ENCODE measurements at regions of chr11 and their contacts with region 1.

Region 1: DNA sequence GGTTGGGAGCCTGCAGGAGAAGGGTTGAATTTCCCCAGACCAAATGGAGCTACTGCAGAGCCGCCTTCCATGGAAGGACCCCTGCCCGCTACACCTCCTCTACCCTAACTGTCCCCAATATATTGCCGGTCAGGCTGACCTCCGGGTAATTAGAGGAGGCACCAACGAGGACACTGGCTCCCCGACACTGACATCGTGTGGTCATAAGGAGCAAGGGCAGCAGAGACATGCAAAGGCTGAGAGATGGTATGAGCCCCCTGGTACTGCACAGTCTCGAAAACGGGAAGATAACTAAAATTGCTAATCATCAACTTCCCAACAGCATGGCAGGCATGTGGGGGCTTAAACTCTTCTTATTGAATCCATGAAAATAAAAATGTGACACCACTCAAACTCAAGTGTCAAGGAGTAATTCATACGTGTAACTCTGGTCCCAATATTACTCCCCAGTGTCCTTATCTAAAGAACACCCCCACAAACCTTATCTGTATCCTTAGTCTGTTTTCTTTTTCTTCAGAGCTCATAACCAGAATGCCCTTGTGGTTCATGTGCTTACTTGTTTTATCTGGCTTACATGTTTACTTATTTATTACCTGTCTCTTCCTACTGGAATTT is 4.4 kb downstream of the CAVIN3 start:
- DNase-seq: peak; percentile 73
- ATAC-seq: peak; percentile 19

Region 2: DNA sequence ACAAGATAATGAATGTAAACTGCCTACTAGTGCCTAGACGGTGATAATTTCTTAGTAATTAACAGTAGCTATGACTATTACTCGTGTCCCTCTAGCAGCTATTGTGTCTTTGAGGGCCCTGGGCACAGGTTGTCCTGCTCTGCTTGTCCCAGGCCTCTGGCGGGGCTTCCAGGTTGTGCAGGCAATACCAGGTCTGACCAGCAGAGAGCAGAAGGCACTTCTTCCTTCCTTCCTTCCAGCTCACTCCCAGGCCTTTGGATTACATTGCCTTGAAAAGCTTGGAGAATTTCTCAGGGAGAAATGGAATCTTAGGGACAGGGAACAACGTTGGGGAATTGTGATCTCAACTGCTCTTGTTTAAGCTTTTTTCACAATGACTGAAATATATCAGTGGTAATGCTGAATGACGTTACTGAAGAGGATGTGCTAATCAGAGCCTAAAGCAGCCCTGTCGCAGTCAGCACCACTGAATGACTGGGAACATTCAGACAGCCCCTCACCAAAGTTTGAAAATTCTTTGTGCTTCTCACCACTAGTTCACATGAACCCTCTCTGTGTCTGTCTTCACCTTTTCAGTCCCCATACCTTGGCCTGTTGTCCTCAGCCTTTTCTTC is 64.7 kb before region 1 on chr11:
- intact Hi-C with region 1: loop called (anchors 5 kb)
- DNase-seq: peak; percentile 70
- ATAC-seq: peak; percentile 93

Region 3: GRCh38 chr11:6362873-6363678 is 47.2 kb after region 1 on chr11:
- intact Hi-C with region 1: no loop called
- DNase-seq: peak; percentile 87
- ATAC-seq: peak; percentile 95

Region 4: GRCh38 chr11:6419009-6419631 is 103.2 kb after region 1 on chr11 and contains the start of gene APBB1:
- intact Hi-C with region 1: no loop called
- DNase-seq: peak; percentile 82
- ATAC-seq: peak; percentile 97
- total RNA-seq, gene APBB1: 75.8 TPM

Region 5: GRCh38 chr11:6667733-6668374 is 351.9 kb after region 1 on chr11:
- intact Hi-C with region 1: no loop called
- DNase-seq: no peak
- ATAC-seq: peak; percentile 71

Measured in Right ventricle myocardium superior (tissue), 1 donor.